ENCODE measurements at regions of chr15 and their contacts with region 1.

Region 1: DNA sequence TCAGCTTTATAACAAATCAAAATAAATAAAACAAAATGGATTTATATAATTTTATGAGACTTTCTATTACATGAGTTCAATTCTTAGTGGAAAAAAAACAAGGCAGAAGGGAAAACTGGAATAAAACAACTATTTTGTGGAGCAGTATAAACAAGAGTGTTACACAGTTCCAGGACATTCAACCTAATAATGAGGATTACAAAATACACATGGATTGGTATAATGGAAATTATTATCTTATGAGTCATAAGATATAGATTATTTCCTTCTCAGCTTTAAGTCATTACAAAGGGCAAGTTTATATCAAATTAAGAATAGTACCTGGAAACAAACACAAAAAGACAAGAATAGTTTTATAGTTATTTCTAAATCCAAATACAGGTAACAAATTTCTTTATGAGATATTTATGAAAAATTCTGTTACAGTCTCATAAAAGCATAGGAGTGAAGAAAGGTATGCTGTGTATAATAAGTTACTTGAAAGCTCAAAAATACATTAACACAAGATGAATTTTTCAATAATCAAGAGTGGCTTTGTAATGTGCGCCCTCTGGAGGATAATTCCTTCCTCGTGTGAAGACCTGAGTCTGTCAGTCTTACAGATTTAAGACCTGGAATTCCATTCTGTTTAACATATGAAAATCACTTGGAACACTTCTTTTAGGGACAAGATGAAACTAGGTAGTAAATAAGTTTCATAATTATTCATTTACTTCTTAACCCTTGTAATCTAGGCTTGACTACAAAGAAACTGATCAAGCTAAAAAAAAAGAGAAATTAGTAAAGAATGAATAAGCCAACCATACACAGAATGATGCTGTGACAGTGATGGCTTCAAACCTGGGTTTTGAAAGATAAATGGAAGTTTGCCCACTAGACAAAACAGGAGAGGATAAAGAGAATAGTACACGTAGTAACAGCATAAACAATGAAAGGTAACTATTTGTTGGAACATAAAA is 9.5 kb downstream of the COPS2 start:
- DNase-seq: peak; percentile 53
- ATAC-seq: no peak
- H3K4me3 ChIP-seq: no peak overlapping the region
- H3K4me3 Mint-ChIP-seq: no peak overlapping the region
- H3K27ac ChIP-seq: peak overlapping the region in 1 of 2 donors; percentile 12
- H3K27ac Mint-ChIP-seq: no peak overlapping the region
- H3K4me1 ChIP-seq: peaks cover 5 to 14% of the 10 kb centered on the region in 2 donors
- H3K4me1 Mint-ChIP-seq: peaks cover 36% of the 10 kb centered on the region
- H3K27me3 ChIP-seq: no peaks in the 10 kb centered on the region
- H3K27me3 Mint-ChIP-seq: no peaks in the 10 kb centered on the region
- CTCF ChIP-seq: peak; percentile 70

Region 2: GRCh38 chr15:48112242-48112641 is 1033.7 kb before region 1 on chr15:
- CTCF ChIA-PET with region 1: no interaction called
- POLR2A ChIA-PET with region 1: no interaction called
- intact Hi-C with region 1: no loop called
- DNase-seq: no peak
- ATAC-seq: no peak
- H3K4me3 ChIP-seq: no peak overlapping the region
- H3K4me3 Mint-ChIP-seq: no peak overlapping the region
- H3K27ac ChIP-seq: no peak overlapping the region
- H3K27ac Mint-ChIP-seq: no peak overlapping the region
- H3K4me1 ChIP-seq: no peaks in the 10 kb centered on the region
- H3K4me1 Mint-ChIP-seq: no peaks in the 10 kb centered on the region
- H3K27me3 ChIP-seq: peaks cover 0 to 8% (median 5%) of the 10 kb centered on the region in 4 experiments
- H3K27me3 Mint-ChIP-seq: peaks cover 29% of the 10 kb centered on the region
- CTCF ChIP-seq: no peak

Region 3: DNA sequence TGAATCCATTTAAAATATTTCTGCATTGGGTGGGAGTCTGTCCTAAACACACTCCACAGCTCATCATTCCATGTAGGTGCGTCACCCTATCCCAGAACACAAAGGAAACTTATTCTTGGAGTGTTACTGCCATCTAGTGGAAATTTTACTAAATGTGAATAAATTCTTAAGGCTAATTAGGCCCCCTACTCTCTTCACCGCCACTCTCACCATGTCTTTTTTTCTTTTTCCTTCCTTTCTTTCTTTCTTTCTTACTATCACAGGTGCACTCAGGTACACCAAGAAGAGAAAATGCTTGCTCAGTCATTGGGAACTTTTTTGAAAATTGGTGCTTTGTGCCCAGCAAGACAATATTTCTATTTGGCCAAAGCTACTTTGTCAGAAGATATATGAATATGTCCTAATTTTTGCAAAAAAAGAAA is 999.5 kb after region 1 on chr15:
- CTCF ChIA-PET with region 1: interaction called, 3 read pairs
- POLR2A ChIA-PET with region 1: no interaction called
- intact Hi-C with region 1: loop called (anchors 10 kb)
- DNase-seq: peak; percentile 64
- ATAC-seq: peak; percentile 33
- H3K4me3 ChIP-seq: no peak overlapping the region
- H3K4me3 Mint-ChIP-seq: no peak overlapping the region
- H3K27ac ChIP-seq: no peak overlapping the region
- H3K27ac Mint-ChIP-seq: no peak overlapping the region
- H3K4me1 ChIP-seq: no peaks in the 10 kb centered on the region
- H3K4me1 Mint-ChIP-seq: peaks cover 4% of the 10 kb centered on the region
- H3K27me3 ChIP-seq: no peaks in the 10 kb centered on the region
- H3K27me3 Mint-ChIP-seq: no peaks in the 10 kb centered on the region
- CTCF ChIP-seq: peak; percentile 81